GM10248 (cell line): ENCODE measurements at regions of chr10 and their contacts with region 1.

Region 1: DNA sequence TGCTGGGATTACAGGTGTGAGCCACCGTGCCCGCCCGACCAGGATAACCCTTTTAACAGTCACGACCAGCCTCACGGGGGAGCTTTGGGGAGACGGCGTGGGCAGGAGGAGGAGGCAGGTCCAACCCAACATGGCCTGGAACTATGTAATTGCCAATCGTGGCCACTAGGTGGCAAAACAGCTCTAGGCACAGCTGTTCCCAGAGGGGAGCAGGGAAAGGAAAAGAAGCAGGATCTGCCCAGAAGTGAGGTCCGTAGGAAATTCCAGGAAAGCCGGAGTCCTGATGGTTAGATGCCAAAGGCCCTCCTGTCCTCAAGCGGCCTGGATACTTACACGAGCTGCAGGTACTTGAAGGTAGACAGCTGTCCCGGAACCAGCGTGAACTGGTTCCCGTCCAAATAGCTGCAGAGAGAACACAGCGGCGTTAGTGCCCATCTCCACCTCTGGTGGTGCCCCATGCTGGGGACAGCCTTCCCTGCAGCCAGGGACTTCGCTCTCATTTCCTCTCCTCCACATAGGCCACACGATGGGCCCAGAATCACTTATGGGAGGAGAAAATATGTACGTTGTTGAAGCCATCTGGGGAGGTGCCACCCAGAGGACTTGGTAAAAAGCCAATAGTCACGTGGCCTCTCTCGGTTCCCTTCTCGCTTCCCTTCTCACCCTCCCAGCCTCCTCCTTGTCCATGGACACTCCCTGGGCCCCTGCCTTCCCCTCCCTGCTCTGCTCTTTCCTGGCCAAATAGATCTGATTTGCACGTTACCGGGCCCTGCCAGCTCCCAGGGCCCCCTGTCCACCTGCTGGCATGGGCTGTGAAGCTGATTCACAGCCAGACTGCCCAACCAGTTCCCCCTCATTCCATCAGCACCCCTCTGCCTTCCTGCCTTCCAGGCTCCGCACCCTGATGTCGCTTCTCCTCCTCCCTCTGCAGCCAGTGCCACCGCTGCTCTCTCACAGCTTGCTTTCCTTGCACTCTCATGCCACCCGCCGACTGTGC is 148.1 kb downstream of the SLIT1 start:
- DNase-seq: peak; percentile 83
- CTCF ChIP-seq: peak; percentile 89

Region 2: GRCh38 chr10:96910488-96911395 is 126.9 kb before region 1 on chr10:
- CTCF ChIA-PET with region 1: interaction called, 11 read pairs
- POLR2A ChIA-PET with region 1: no interaction called
- DNase-seq: peak; percentile 57
- CTCF ChIP-seq: peak; percentile 72

Region 3: DNA sequence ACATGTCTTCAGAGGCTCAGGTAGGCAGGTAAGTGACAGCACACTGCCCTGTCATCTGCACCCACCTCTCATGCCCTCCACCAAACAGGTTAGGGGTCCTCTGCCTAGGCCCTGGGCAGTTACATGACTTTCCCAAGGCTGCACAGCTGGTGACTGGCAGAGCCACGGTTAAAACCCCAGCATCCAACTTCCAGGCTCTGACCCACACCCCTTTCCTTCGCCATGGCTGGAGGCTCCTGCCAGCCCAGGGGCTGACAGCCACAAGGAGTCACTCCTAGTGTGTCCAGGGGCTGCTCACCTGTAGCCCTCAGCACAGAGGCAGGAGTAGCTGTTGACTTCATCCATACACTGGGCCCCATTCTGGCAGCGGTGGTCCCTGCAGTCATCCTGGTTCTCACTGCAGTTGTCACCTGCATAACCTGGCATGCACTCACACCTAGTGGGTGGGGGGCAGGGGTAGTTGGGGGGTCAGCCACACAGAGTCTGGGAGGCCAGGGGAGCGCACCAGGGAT is 26.9 kb before region 1 on chr10:
- CTCF ChIA-PET with region 1: interaction called, 16 read pairs
- POLR2A ChIA-PET with region 1: no interaction called
- DNase-seq: no peak
- CTCF ChIP-seq: no peak

Region 4: DNA sequence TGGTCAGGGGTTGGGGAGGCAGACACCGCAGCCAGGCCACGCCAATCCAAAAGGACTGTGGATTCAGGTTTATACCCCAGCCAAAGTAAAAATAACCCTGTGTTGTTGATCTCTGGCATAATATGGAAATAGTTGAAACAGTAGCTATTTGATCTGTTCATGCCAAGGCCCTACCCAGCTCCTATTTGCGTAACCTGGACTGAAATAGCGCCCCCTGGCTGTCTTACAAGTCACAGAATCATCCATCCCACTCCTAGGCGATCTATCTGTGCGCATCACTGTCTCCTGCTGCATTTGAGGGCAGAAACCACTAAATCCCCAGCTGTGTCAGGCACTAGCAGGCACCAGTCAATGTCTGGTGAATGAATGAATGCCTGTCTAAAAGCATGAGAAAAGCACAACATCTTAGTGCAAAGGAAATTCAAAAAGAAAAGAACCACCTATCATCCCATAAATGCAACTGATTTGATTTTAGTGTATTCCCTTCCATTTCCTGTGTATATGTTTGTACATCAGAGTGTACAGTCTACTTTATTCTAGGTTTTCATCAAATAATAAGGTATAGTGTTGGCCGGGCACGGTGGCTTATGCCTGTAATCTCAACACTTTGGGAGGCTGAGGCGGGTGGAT is 11.9 kb before region 1 on chr10:
- CTCF ChIA-PET with region 1: interaction called, 136 read pairs
- POLR2A ChIA-PET with region 1: no interaction called
- DNase-seq: peak; percentile 70
- CTCF ChIP-seq: peak; percentile 44

Region 5: DNA sequence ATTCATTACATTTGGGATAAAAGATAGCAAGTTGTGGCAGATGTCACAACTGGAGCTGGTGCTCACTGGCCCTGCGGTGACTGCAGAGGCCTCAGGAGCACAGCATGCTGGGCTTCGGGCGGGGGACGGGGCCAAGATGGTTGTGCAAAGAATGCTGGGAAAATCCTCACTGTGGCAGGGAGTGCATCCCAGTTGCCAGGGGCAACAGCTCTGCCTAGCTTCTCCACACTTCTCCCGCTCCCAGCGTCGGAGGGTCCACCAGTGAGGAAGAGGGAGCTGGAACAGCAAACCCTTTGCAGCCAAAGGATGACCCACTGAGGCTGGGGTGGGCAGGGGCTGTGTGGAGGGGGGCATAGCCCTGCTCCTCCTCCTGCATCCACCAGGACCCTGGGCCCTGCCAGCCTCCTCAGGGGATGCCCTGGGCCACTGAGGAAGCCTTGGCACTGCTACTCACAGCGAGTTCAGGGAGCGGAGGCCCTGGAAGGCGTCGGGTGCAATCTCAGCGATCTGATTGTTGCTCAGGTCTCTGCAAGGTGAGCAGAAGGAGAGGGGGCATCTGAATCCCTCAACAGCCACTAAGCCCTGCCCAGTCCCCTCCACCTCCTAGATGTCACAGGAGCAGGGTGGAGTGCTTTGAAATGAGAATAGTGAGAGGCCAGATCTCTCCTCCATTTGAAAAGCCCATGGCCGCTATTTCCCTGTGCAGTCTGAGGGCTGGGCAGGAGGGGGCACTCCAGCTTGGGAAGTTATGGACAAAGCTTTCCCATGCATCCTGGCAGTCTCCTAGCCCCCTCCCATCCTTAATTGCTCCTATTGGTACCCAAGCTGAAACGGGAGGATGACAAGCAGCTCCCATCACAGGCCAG is 21.6 kb after region 1 on chr10:
- CTCF ChIA-PET with region 1: interaction called, 31 read pairs
- POLR2A ChIA-PET with region 1: no interaction called
- DNase-seq: no peak
- CTCF ChIP-seq: no peak

Region 6: GRCh38 chr10:97081621-97082235 is 44.1 kb after region 1 on chr10:
- CTCF ChIA-PET with region 1: interaction called, 13 read pairs
- POLR2A ChIA-PET with region 1: no interaction called
- DNase-seq: peak; percentile 83
- CTCF ChIP-seq: peak; percentile 73

Region 7: GRCh38 chr10:97188261-97188711 is 150.6 kb after region 1 on chr10:
- CTCF ChIA-PET with region 1: no interaction called
- POLR2A ChIA-PET with region 1: no interaction called
- DNase-seq: peak; percentile 47
- CTCF ChIP-seq: no peak

Region 8: GRCh38 chr10:97204826-97205679 is 167.4 kb after region 1 on chr10:
- CTCF ChIA-PET with region 1: interaction called, 78 read pairs
- POLR2A ChIA-PET with region 1: no interaction called
- DNase-seq: no peak
- CTCF ChIP-seq: no peak